ENCODE measurements at regions of chr14 and their contacts with region 1.

Region 1: DNA sequence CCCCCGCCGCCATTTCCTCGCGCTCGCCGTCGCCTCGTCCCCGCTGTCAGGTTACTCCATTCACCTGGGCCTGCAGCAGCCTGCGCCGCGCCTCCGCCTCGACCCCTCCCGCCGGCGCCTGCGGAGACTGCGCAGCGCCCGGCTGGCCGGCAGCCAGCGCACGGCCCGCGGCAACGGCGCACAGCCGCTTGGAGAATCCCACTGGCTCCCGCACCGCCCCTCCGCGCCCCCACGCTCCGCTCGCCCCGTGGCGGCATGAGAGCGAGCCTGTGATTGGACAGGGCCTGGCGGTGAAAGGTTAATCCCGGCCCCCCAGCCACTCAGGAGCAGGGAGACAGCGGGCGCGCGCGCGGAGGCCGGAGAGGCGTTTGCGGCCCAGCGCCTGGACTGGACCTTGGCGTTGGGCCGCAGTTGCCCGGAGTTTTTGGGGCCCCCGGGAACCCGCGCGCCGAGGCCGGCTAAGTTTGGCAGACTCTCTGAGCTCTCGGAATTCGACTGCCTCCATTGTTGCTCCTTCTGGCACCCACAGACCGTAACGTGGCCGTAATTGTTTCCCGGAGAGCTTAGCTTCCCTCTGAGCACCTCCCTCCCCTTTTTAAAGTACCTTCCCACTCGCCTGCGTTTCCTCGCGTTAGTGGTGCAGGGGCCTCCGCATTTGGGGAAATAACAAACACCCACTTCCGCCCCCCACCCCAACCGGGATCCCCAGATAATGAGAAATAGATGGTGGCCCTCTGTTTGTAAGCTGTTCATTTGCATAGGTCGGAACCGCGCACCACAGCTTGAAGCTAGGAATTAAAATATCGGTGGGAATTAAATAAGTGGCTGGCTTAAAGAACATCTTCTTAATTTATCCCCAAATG is at the start of gene DICER1:
- DNase-seq: peak; percentile 95
- ATAC-seq: peak; percentile 82
- H3K4me3 ChIP-seq: peak within 1 kb of the TSS; percentile 69 to 98 (median 84)
- H3K4me3 Mint-ChIP-seq: peak within 1 kb of the TSS; percentile 99
- H3K27ac ChIP-seq: peak within 1 kb of the TSS; percentile 94
- H3K27ac Mint-ChIP-seq: peak within 1 kb of the TSS; percentile 100
- H3K4me1 ChIP-seq: peaks cover 20 to 34% of the 10 kb centered on the region in 2 donors
- H3K4me1 Mint-ChIP-seq: peaks cover 38% of the 10 kb centered on the region
- H3K27me3 ChIP-seq: no peaks in the 10 kb centered on the region
- H3K27me3 Mint-ChIP-seq: no peaks in the 10 kb centered on the region
- CTCF ChIP-seq: no peak
- total RNA-seq, gene DICER1: 90.4 and 103 TPM in 2 replicates

Region 2: DNA sequence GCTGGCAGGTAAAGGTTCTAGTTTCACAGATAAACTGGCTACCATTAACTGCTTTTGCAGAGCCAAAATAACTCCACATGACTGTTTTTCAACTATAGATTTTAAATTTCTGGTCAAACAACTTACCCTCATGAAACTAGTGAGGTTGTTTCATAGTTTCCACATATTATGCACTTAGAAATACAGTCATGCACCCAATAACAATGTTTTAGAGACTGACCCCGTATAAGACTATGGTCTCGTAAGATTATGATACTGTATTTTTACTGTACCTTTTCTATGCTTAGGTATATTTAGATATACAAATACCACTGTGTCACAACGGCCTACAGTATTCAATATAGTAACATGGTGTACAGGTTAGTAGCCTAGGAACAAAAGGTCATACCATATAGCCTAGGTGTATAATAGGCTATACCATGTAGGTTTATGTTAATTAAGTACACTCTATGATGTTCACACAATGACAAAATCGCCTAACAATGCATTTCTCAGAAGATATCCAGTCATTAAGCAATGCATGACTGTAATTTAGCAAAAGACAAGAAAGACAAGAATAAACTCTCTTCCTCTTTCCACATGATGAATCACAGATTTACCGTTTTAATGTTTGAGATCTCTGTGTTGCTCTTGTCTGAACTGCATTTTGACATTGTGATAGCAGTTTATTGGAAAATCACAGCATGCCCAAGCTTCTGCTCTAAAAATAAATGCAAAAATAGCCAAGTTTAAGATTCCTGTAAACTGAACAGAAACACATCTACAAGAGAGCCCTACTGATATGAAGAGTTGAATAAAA is 17.3 kb before region 1 on chr14:
- CTCF ChIA-PET with region 1: interaction called, 3 read pairs
- POLR2A ChIA-PET with region 1: interaction called, 4 read pairs
- intact Hi-C with region 1: loop called (anchors 2 kb)
- DNase-seq: peak; percentile 22
- ATAC-seq: peak; percentile 61
- H3K4me3 ChIP-seq: peak overlapping the region in 1 of 5 experiments; percentile 22
- H3K4me3 Mint-ChIP-seq: peak overlapping the region; percentile 44
- H3K27ac ChIP-seq: peak overlapping the region in 1 of 2 donors; percentile 82
- H3K27ac Mint-ChIP-seq: peak overlapping the region; percentile 68
- H3K4me1 ChIP-seq: peaks cover 26 to 40% of the 10 kb centered on the region in 2 donors
- H3K4me1 Mint-ChIP-seq: peaks cover 74% of the 10 kb centered on the region
- H3K27me3 ChIP-seq: no peaks in the 10 kb centered on the region
- H3K27me3 Mint-ChIP-seq: no peaks in the 10 kb centered on the region
- CTCF ChIP-seq: no peak

Region 3: GRCh38 chr14:95265106-95266094 is 107.8 kb after region 1 on chr14:
- CTCF ChIA-PET with region 1: no interaction called
- POLR2A ChIA-PET with region 1: interaction called, 3 read pairs
- intact Hi-C with region 1: loop called (anchors 1 kb)
- DNase-seq: peak; percentile 82
- ATAC-seq: peak; percentile 94
- H3K4me3 ChIP-seq: peak overlapping the region in 1 of 5 experiments; percentile 19
- H3K4me3 Mint-ChIP-seq: peak overlapping the region; percentile 67
- H3K27ac ChIP-seq: peak overlapping the region; percentile 32 to 57
- H3K27ac Mint-ChIP-seq: peak overlapping the region; percentile 79
- H3K4me1 ChIP-seq: peaks cover 21 to 27% of the 10 kb centered on the region in 2 donors
- H3K4me1 Mint-ChIP-seq: peaks cover 44% of the 10 kb centered on the region
- H3K27me3 ChIP-seq: no peaks in the 10 kb centered on the region
- H3K27me3 Mint-ChIP-seq: no peaks in the 10 kb centered on the region
- CTCF ChIP-seq: no peak

Region 4: DNA sequence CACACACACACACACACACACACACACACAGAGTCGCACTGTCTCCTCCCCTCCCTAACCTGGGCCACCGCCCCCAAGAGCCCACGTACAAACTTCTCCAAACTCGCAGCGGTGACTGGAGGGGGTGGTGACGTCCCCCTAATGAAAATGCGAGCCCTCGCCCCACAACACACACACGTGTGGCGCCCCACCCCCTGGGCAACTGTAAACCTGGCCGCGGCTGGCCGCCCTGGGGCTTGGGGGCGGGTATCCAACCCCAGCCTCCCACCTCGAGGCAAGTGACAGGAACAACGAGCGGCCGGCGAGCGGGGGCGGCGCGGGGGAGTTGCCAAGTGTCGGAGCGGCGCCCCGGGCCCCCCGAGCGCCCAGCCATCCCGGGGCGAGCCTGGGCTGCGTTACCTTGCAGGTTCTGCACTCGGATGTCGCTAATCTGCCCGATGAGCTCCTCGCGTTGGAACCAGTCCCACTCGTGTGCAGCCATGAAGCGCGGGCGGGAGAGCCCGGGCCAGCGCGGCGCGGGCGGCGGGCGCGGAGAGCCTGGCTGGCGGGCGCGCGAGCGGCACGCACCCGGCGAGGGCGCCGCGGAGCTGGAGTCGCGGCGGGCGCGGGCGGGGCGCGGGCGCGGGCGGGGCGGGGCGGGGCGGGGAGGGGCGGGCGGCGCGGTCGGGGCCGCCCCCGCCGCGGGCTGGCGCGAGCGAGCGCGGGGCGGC is 161.9 kb after region 1 on chr14 and contains the start of gene CLMN:
- CTCF ChIA-PET with region 1: no interaction called
- POLR2A ChIA-PET with region 1: no interaction called
- intact Hi-C with region 1: loop called (anchors 2 kb)
- DNase-seq: peak; percentile 86
- ATAC-seq: peak; percentile 83
- H3K4me3 ChIP-seq: peak within 1 kb of the TSS; percentile 9 to 74 (median 71)
- H3K4me3 Mint-ChIP-seq: peak within 1 kb of the TSS; percentile 91
- H3K27ac ChIP-seq: peak within 1 kb of the TSS; percentile 47 to 66
- H3K27ac Mint-ChIP-seq: peak within 1 kb of the TSS; percentile 93
- H3K4me1 ChIP-seq: peaks cover 13 to 25% of the 10 kb centered on the region in 2 donors
- H3K4me1 Mint-ChIP-seq: peaks cover 30% of the 10 kb centered on the region
- H3K27me3 ChIP-seq: no peaks in the 10 kb centered on the region
- H3K27me3 Mint-ChIP-seq: no peaks in the 10 kb centered on the region
- CTCF ChIP-seq: no peak
- total RNA-seq, gene CLMN: 51.1 and 51.5 TPM in 2 replicates

Region 5: GRCh38 chr14:95327558-95328374 is 170.2 kb after region 1 on chr14:
- CTCF ChIA-PET with region 1: interaction called, 8 read pairs
- POLR2A ChIA-PET with region 1: interaction called, 9 read pairs
- intact Hi-C with region 1: loop called (anchors 2 kb)
- DNase-seq: peak; percentile 88
- ATAC-seq: peak; percentile 86
- H3K4me3 ChIP-seq: peak overlapping the region in 4 of 5 experiments; percentile 20 to 42 (median 28)
- H3K4me3 Mint-ChIP-seq: peak overlapping the region; percentile 84
- H3K27ac ChIP-seq: peak overlapping the region; percentile 71 to 96
- H3K27ac Mint-ChIP-seq: peak overlapping the region; percentile 92
- H3K4me1 ChIP-seq: peaks cover 42 to 46% of the 10 kb centered on the region in 2 donors
- H3K4me1 Mint-ChIP-seq: peaks cover 54% of the 10 kb centered on the region
- H3K27me3 ChIP-seq: no peaks in the 10 kb centered on the region
- H3K27me3 Mint-ChIP-seq: no peaks in the 10 kb centered on the region
- CTCF ChIP-seq: no peak

Region 6: GRCh38 chr14:96796851-96797581 is 1639.5 kb after region 1 on chr14 and contains the start of gene VRK1:
- CTCF ChIA-PET with region 1: no interaction called
- POLR2A ChIA-PET with region 1: no interaction called
- intact Hi-C with region 1: loop called (anchors 5 kb)
- DNase-seq: peak; percentile 95
- ATAC-seq: peak; percentile 99
- H3K4me3 ChIP-seq: peak within 1 kb of the TSS; percentile 62 to 95 (median 80)
- H3K4me3 Mint-ChIP-seq: peak within 1 kb of the TSS; percentile 90
- H3K27ac ChIP-seq: peak within 1 kb of the TSS; percentile 80 to 82
- H3K27ac Mint-ChIP-seq: peak within 1 kb of the TSS; percentile 91
- H3K4me1 ChIP-seq: peaks cover 11% of the 10 kb centered on the region in 2 donors
- H3K4me1 Mint-ChIP-seq: peaks cover 20% of the 10 kb centered on the region
- H3K27me3 ChIP-seq: peaks cover 0 to 9% (median 2%) of the 10 kb centered on the region in 4 experiments
- H3K27me3 Mint-ChIP-seq: peaks cover 11% of the 10 kb centered on the region
- CTCF ChIP-seq: no peak
- total RNA-seq, gene VRK1: 28.2 and 35.3 TPM in 2 replicates